Lower leg skin (tissue), 4 donors: ENCODE measurements at regions of chr12 and their contacts with region 1.

Region 1: DNA sequence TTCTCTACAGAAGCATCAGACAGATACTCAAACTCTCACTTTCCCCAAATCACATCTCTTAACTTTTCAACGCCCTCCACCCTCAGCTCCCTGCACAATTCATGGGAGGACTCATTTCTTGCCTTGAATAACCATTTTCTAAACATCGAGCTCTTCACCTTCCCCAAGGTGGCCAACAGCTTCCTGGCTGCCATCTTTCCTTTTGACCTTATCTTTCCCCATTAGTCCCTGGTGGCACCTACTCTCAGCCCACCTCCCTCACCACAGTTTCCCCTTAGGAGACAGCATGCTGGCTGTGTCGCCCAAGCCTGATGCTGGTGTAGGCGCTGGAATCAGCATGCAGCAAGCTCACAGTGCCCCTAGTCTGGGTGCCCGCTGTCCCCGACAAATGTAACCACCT is 8.4 kb upstream of the OAS1 start:
- DNase-seq: no peak
- H3K4me3 ChIP-seq: no peak overlapping the region
- CTCF ChIP-seq: no peak
- POLR2A ChIP-seq: no peak

Region 2: GRCh38 chr12:110966081-110966760 is 1932.2 kb before region 1 on chr12:
- intact Hi-C with region 1: no loop called
- DNase-seq: no peak
- H3K4me3 ChIP-seq: no peak overlapping the region
- CTCF ChIP-seq: no peak
- POLR2A ChIP-seq: no peak

Region 3: GRCh38 chr12:113019041-113019440 is 120.7 kb after region 1 on chr12:
- intact Hi-C with region 1: no loop called
- DNase-seq: no peak
- H3K4me3 ChIP-seq: no peak overlapping the region
- CTCF ChIP-seq: no peak
- POLR2A ChIP-seq: no peak

Region 4: GRCh38 chr12:113030875-113031525 is 132.6 kb after region 1 on chr12:
- intact Hi-C with region 1: loop called (anchors 5 kb)
- DNase-seq: peak in 1 of 2 donors; percentile 22
- H3K4me3 ChIP-seq: no peak overlapping the region
- CTCF ChIP-seq: no peak
- POLR2A ChIP-seq: no peak

Region 5: DNA sequence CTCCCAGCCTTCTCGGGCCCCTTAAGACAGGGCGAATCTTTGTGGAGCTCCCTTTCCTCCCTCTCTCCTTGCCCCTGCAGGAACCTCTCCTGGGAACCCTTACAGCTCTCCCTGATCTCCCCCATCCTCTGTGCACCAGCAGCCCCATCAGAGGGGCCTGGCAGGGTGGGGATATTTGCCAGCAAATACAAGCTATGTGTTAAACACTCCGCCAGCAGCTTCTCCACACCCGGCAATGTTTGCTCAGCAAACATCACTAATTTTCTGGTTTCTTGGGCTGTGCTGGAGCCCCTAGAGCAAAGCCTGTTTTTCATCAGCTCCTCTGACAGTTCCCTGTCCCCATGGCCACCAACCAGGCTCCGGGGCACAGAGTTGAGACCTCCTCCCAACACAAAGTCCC is 720.8 kb after region 1 on chr12:
- intact Hi-C with region 1: no loop called
- DNase-seq: no peak
- H3K4me3 ChIP-seq: no peak overlapping the region
- CTCF ChIP-seq: no peak
- POLR2A ChIP-seq: no peak